Heart left ventricle (tissue), 16 donors: ENCODE measurements at regions of chr14 and their contacts with region 1.

Region 1: DNA sequence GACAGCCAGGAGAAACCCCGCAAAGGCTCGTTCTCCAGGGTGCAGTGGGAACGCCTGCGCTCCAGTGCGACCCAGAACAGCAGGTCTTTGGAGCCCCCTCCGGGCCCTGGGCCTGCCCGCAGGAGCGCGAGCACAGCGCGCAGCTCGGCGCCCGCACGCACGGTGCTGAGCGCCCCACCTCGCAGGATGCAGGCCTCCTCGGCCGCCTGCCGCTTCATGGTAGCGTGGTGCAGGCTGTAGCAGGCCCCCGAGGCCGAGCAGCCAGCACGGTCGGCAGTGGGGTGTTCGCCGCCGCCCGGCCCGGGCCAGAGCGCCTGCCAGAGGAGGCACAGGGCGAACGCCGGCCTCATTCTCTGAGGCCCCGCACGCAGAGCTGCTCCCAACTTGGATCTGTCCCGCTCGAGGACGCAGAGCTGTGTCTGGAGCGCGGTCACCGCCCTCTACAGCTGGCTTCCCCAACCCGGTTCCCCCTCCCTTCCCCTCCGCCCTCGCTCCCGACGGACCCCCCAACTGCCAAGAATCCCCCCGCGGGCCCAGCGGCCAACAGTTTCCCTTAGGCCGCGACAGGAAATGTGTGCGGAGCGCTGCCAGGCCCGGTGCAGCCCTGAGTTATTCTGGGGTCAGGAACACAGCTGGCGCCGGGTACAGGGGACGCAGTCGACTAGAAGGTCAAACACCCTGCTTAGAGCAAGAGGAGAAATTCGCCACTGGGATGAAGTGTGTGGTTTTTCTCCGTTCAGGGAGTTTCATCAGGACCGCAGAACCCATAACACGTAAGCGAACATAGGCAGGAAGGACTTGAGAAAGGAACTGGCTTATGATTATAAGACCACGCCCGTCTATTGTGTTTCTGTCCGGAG is at the start of gene CLEC14A:
- DNase-seq: peak; percentile 82 to 90 (median 89)
- ATAC-seq: peak; percentile 84 to 93 (median 90)
- H3K4me3 ChIP-seq: peak within 1 kb of the TSS; percentile 53 to 82 (median 73)
- H3K27ac ChIP-seq: peak within 1 kb of the TSS; percentile 85 to 98 (median 95)
- H3K4me1 ChIP-seq: peaks cover 0 to 12% (median 5%) of the 10 kb centered on the region in 12 donors
- H3K27me3 ChIP-seq: peaks cover 0 to 33% (median 5%) of the 10 kb centered on the region in 9 donors
- CTCF ChIP-seq: no peak
- POLR2A ChIP-seq: peak in 1 of 2 donors; percentile 64
- total RNA-seq, gene CLEC14A: 23.6 to 59.9 (median 31.3) TPM

Region 2: GRCh38 chr14:38208618-38209562 is 47.0 kb before region 1 on chr14:
- intact Hi-C with region 1: loop called in 2 of 10 experiments (anchors 5 kb)
- DNase-seq: peak in 3 of 5 donors; percentile 11 to 56 (median 20)
- ATAC-seq: peak in 3 of 4 donors; percentile 65 to 77 (median 70)
- H3K4me3 ChIP-seq: peak overlapping the region; percentile 16 to 61 (median 55)
- H3K27ac ChIP-seq: peak overlapping the region in 1 of 12 donors; percentile 29
- H3K4me1 ChIP-seq: peaks cover 0 to 30% (median 5%) of the 10 kb centered on the region in 12 donors
- H3K27me3 ChIP-seq: peaks cover 0 to 58% (median 38%) of the 10 kb centered on the region in 9 donors
- CTCF ChIP-seq: peak in 7 of 12 donors; percentile 7 to 33 (median 15)
- POLR2A ChIP-seq: no peak

Region 3: DNA sequence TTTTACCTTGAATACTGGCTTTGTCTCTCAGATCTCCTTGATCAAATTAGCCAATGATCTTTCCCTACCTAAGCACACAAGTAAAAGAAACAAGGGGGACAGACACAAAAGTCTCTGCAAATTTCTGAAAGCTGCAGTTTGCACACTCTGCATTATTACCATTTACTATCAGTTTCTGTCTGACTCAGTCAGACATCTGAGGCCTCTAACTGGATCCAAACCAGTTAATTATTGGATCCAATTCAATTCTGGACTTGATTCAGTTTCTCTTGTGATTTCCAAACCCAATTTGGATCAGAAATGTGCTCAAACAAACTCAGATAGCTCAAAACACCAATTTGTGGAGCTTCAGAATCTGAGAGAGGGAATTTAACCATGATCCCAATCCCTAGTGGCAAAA is 31.6 kb before region 1 on chr14:
- intact Hi-C with region 1: no loop called
- DNase-seq: no peak
- ATAC-seq: no peak
- H3K4me3 ChIP-seq: no peak overlapping the region
- H3K27ac ChIP-seq: no peak overlapping the region
- H3K4me1 ChIP-seq: no peaks in the 10 kb centered on the region
- H3K27me3 ChIP-seq: no peaks in the 10 kb centered on the region
- CTCF ChIP-seq: no peak
- POLR2A ChIP-seq: no peak

Region 4: GRCh38 chr14:38297681-38298080 is 41.8 kb after region 1 on chr14:
- intact Hi-C with region 1: loop called in 2 of 10 experiments (anchors 5 kb)
- DNase-seq: no peak
- ATAC-seq: no peak
- H3K4me3 ChIP-seq: no peak overlapping the region
- H3K27ac ChIP-seq: no peak overlapping the region
- H3K4me1 ChIP-seq: no peaks in the 10 kb centered on the region
- H3K27me3 ChIP-seq: no peaks in the 10 kb centered on the region
- CTCF ChIP-seq: no peak
- POLR2A ChIP-seq: no peak

Region 5: DNA sequence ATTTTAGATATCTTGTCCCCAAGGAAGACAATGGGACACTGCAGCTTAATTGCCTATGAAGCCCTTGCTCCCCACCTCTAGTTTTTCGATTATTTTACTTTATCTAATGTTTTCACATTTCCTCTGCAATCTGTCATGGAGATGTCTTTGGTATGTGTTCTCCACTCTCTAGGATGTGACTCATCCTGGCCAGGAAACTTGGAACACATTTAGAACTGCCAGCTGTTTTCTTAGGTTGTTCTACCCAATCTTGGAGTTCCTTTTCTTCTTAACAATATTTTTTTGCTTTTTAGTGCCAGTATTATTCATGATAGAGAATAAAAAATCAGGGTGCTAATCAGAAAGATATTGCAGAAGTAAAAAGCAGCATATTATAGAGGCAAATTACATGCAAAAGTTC is 101.7 kb after region 1 on chr14:
- intact Hi-C with region 1: loop called in 3 of 10 experiments (anchors 2 to 10 kb)
- DNase-seq: no peak
- ATAC-seq: peak in 3 of 4 donors; percentile 87 to 96 (median 90)
- H3K4me3 ChIP-seq: no peak overlapping the region
- H3K27ac ChIP-seq: peak overlapping the region in 9 of 12 donors; percentile 24 to 62 (median 49)
- H3K4me1 ChIP-seq: peaks cover 0 to 16% (median 4%) of the 10 kb centered on the region in 12 donors
- H3K27me3 ChIP-seq: no peaks in the 10 kb centered on the region
- CTCF ChIP-seq: no peak
- POLR2A ChIP-seq: no peak

Region 6: DNA sequence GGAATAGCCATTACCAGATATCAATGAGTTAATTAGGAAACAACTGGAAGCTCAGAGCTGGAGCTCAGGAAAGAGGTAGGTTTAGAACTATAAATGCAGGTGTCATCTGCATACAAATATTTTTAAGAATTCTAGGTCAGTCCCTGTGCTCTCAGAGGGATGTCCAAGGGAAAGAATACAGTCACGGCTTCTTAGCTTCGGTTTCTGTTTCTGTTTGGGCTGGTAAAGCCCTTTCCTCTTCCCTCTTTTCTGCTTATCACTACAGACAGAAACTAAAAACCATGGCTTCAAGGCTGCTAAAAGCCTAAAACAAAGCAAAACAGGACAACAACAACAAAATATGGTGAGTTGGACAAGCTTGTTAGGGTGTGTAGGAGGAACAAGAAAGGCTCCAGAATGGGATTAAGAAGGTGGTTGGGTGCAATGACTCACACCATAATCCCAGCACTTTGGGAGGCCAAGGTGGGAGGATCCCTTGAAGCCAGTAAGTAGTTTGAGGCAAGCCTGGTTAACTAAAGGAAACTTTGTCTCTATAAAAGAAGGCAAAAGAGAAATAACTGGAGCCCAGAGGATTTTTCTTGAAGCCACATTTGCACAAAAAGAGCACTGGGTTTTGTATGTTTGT is 734.1 kb after region 1 on chr14:
- intact Hi-C with region 1: loop called in 1 of 10 experiments (anchors 5 kb)
- DNase-seq: no peak
- ATAC-seq: peak in 2 of 4 donors; percentile 29 to 56
- H3K4me3 ChIP-seq: peak overlapping the region in 2 of 12 donors; percentile 6 to 32
- H3K27ac ChIP-seq: peak overlapping the region in 8 of 12 donors; percentile 35 to 70 (median 60)
- H3K4me1 ChIP-seq: peaks cover 0 to 41% (median 6%) of the 10 kb centered on the region in 12 donors
- H3K27me3 ChIP-seq: no peaks in the 10 kb centered on the region
- CTCF ChIP-seq: no peak
- POLR2A ChIP-seq: no peak